Natural killer cell (primary cell): ENCODE measurements at regions of chr1 and their contacts with region 1.

Region 1: GRCh38 chr1:155911156-155912055 is at the start of gene RIT1:
- DNase-seq: peak; percentile 82 to 93
- ATAC-seq: peak; percentile 97 to 99 (median 98)
- H3K4me3 ChIP-seq: peak within 1 kb of the TSS; percentile 71
- H3K4me3 Mint-ChIP-seq: peak within 1 kb of the TSS; percentile 99
- H3K27ac ChIP-seq: peak within 1 kb of the TSS; percentile 71
- H3K27ac Mint-ChIP-seq: peak within 1 kb of the TSS; percentile 95 to 99
- H3K4me1 ChIP-seq: peaks cover 11% of the 10 kb centered on the region
- H3K4me1 Mint-ChIP-seq: peaks cover 21 to 25% of the 10 kb centered on the region in 2 donors
- H3K27me3 ChIP-seq: no peaks in the 10 kb centered on the region
- H3K27me3 Mint-ChIP-seq: no peaks in the 10 kb centered on the region
- CTCF ChIP-seq: no peak
- total RNA-seq, gene RIT1: 79.1 to 86.1 (median 79.2) TPM

Region 2: GRCh38 chr1:155934097-155934935 is 22.9 kb after region 1 on chr1 and contains the start of gene KHDC4:
- intact Hi-C with region 1: loop called (anchors 1 kb)
- DNase-seq: peak; percentile 91 to 99
- ATAC-seq: peak; percentile 92 to 98 (median 93)
- H3K4me3 ChIP-seq: peak within 1 kb of the TSS; percentile 93
- H3K4me3 Mint-ChIP-seq: no peak within 1 kb of the TSS
- H3K27ac ChIP-seq: peak within 1 kb of the TSS; percentile 92
- H3K27ac Mint-ChIP-seq: no peak within 1 kb of the TSS
- H3K4me1 ChIP-seq: peaks cover 31% of the 10 kb centered on the region
- H3K4me1 Mint-ChIP-seq: peaks cover 19 to 21% of the 10 kb centered on the region in 2 donors
- H3K27me3 ChIP-seq: no peaks in the 10 kb centered on the region
- H3K27me3 Mint-ChIP-seq: no peaks in the 10 kb centered on the region
- CTCF ChIP-seq: peak; percentile 21
- total RNA-seq, gene KHDC4: 61.9 to 101 (median 85.9) TPM

Region 3: DNA sequence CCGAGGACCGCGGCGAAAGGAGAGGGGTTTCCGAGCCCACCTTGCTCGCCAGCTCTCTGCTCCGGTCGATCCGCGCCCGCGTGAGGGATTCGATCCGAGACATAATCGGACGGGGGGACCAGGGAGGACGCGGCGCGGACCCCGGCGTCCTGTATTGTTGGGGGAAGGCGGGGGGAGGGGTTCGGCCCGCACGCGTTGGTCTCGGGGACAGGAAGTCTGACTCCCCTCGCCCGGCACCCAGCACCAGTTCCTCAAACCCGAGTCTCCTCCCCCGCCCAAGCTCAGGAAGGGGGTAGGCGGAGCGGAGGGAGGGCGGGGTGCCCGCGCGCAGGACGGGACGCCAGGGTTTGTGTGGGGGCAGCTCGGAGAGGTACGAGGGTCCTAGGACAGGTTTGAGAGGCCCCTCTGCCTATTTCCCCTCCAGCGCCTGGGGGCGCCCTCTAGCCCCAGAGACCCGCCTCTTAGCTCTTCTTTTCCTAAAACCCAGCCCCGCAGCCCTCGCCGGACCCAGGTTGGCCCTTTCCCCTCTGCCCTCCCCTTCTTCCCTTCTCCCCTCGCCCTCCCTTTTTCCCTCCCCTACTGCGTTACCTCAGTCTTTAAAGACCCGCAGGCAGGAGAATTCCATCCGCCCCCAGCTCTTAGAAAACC is 67.0 kb after region 1 on chr1 and contains the start of gene ARHGEF2:
- intact Hi-C with region 1: loop called (anchors 5 kb)
- DNase-seq: peak; percentile 67 to 83
- ATAC-seq: peak; percentile 55 to 75 (median 60)
- H3K4me3 ChIP-seq: peak within 1 kb of the TSS; percentile 96
- H3K4me3 Mint-ChIP-seq: peak within 1 kb of the TSS; percentile 92
- H3K27ac ChIP-seq: peak within 1 kb of the TSS; percentile 79
- H3K27ac Mint-ChIP-seq: peak within 1 kb of the TSS; percentile 90 to 94
- H3K4me1 ChIP-seq: peaks cover 83% of the 10 kb centered on the region
- H3K4me1 Mint-ChIP-seq: peaks cover 73 to 85% of the 10 kb centered on the region in 2 donors
- H3K27me3 ChIP-seq: no peaks in the 10 kb centered on the region
- H3K27me3 Mint-ChIP-seq: no peaks in the 10 kb centered on the region
- CTCF ChIP-seq: no peak
- total RNA-seq, gene ARHGEF2: 143 to 200 (median 147) TPM